Right cardiac atrium (tissue), 5 donors: ENCODE measurements at regions of chr3 and their contacts with region 1.

Region 1: DNA sequence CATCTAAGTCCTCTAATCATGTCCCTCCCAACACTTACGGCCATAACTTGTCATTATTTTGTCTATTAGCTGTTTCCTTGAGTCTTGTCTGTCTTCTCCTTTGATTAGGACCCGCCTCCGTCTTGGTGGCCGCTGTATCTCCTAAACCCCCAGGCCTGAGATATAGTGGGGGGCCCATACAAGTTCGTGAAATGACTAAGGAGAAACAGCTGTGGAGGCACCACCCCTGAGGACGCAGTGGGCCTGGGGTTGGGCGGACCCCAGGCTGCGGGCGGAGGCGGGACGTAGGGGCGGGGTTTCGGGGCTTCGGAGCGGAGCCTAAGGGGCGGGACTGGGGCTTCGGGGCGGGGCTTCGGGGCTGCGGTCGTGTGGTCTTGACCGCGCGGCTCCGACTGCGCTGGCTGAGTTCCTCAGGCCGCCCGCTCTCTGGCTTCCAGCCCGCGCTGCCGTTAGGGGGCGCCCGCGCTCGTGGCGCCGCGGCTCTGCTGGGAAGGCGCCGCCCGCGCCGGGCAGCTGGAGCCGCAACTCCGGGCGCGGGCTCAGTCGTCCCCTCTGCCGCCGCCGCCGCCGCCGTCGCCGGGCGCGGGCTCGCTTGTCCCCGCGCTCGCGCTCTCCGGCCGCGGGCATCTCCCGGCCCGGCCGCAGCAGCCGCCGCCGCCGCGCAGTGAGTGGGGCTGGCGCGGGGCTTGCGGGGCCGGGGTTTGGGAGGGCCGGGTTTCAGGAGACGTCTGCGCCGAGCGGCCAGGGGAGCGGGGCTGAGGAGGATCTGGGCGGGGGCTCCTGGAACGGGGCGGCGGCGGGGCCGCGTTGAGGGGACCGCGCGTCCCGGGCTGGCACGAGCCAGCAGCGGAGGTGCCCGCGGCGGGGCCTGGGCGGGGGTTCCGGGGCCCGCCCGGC is at the start of gene KCTD6:
- DNase-seq: peak; percentile 95 to 98 (median 98)
- ATAC-seq: peak; percentile 97
- H3K4me3 ChIP-seq: peak within 1 kb of the TSS; percentile 99
- H3K27ac ChIP-seq: peak within 1 kb of the TSS; percentile 84
- H3K4me1 ChIP-seq: peaks cover 2% of the 10 kb centered on the region
- H3K27me3 ChIP-seq: no peaks in the 10 kb centered on the region
- total RNA-seq, gene KCTD6: 8.0 to 10.3 (median 8.3) TPM

Region 2: GRCh38 chr3:58324391-58325390 is 167.1 kb before region 1 on chr3:
- intact Hi-C with region 1: loop called in 1 of 4 experiments (anchors 10 kb)
- DNase-seq: no peak
- ATAC-seq: peak in 1 of 2 donors; percentile 17
- H3K4me3 ChIP-seq: no peak overlapping the region
- H3K27ac ChIP-seq: peak overlapping the region; percentile 42
- H3K4me1 ChIP-seq: no peaks in the 10 kb centered on the region
- H3K27me3 ChIP-seq: no peaks in the 10 kb centered on the region

Region 3: GRCh38 chr3:58332575-58333188 is 159.1 kb before region 1 on chr3 and contains the start of gene PXK:
- intact Hi-C with region 1: loop called in 2 of 4 experiments (anchors 5 to 10 kb)
- DNase-seq: peak; percentile 84 to 94 (median 94)
- ATAC-seq: peak; percentile 96 to 97
- H3K4me3 ChIP-seq: peak within 1 kb of the TSS; percentile 92
- H3K27ac ChIP-seq: peak within 1 kb of the TSS; percentile 41
- H3K4me1 ChIP-seq: peaks cover 4% of the 10 kb centered on the region
- H3K27me3 ChIP-seq: no peaks in the 10 kb centered on the region
- total RNA-seq, gene PXK: 11.4 to 17.3 (median 13.7) TPM

Region 4: DNA sequence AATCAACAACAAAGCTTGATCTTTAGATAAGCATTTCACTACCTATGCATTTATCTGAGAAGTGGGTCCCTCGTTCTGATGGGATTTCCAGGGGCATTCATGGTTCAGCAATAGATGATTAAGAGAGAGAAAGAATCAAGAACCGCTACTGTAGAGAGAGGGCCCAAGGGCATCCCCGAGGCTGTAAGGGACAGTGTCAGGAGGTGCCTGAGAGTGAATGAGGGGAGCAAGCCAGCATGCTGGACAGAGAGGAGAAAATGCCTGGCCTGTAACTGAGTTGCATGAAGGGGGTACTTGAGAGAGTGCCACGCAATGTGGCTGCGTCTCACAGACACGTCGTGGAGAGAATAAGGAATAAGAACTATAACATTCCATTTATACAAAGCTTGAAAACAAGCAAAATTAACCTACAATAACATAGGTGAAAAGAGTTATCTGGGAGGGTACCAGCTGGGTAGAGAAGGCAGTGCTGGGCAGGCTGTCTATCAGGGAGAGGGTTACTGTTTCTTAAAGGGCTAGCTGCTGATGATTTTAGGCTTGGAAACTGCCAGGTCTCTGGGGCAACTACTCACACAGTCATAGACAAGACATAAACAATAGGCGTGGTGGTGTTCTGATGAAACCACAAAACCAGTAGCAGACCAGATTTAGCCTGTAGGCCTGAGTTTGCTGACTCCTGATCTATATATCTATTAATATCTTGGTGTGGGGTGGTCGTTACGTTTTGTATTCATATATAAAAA is 932.7 kb after region 1 on chr3:
- intact Hi-C with region 1: no loop called
- DNase-seq: no peak
- ATAC-seq: peak; percentile 65 to 68
- H3K4me3 ChIP-seq: no peak overlapping the region
- H3K27ac ChIP-seq: no peak overlapping the region
- H3K4me1 ChIP-seq: no peaks in the 10 kb centered on the region
- H3K27me3 ChIP-seq: no peaks in the 10 kb centered on the region